Left colon (tissue), 2 donors: ENCODE measurements at regions of chr19 and their contacts with region 1.

Region 1: DNA sequence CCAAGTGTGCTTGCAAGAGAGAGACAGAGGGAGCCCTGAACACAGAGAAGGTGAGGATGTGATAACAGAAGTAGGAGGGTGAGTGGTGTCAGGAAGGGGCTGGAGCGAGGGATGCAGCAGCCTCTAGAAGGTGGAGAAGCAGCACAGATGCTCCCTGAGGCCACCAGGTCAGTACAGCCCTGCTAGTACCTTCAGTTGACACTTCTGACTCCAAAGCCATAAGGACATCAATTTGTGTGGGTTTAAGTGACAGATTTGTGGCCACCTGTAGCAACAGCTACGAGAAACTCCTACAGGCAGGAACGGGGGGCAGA is 6.9 kb downstream of the ERICH4 start:
- DNase-seq: no peak
- ATAC-seq: no peak

Region 2: GRCh38 chr19:41564515-41565378 is 114.9 kb after region 1 on chr19:
- intact Hi-C with region 1: loop called in 1 of 2 experiments (anchors 5 kb)
- DNase-seq: no peak
- ATAC-seq: no peak